ENCODE measurements at regions of chr19 and their contacts with region 1.

Region 1: DNA sequence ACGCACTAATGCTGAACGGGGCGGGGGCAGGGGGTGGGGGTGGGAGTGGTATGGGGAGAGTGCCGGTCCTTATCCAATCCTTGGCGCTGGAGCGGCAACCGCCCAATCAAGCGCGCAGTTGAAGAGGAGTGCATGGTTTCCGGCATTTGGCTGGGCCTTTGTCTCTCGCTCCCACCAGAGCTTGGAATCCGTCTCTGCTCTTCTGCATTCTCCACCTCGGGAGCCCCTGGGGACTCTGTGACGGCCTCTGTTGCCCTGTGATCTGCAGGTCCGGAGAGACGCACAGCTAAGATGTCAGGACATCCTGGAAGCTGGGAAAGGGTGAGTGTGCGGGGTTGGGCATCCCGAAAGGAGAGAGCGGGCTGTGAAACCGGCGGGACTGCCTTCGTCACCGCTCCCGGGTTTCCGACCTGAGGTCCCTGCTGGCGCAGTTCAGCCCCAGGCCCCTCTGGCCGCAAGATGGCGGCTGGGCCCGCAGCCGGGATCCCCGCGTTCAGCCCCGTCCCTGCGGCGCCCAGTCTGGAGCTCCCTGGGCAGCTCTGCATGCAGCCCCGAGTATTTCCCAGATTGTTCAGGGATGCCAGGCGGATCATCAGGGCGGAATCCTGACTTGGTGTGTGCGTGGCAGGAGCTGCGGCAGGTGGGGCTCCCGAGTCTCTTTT is 53.6 kb upstream of the ZNF254 start:
- DNase-seq: peak; percentile 70 to 75 (median 71)
- H3K4me3 ChIP-seq: peak overlapping the region; percentile 77 to 84 (median 78)
- H3K4me3 Mint-ChIP-seq: peak overlapping the region; percentile 100
- H3K27ac ChIP-seq: peak overlapping the region; percentile 86 to 88
- H3K27ac Mint-ChIP-seq: peak overlapping the region; percentile 93 to 99 (median 98)
- H3K4me1 ChIP-seq: peaks cover 29 to 32% of the 10 kb centered on the region in 2 donors
- H3K4me1 Mint-ChIP-seq: peaks cover 38% of the 10 kb centered on the region
- H3K27me3 ChIP-seq: no peaks in the 10 kb centered on the region
- H3K27me3 Mint-ChIP-seq: peaks cover 0 to 2% (median 0%) of the 10 kb centered on the region in 3 donors
- CTCF ChIP-seq: no peak

Region 2: GRCh38 chr19:23896912-23897311 is 136.5 kb before region 1 on chr19:
- intact Hi-C with region 1: no loop called
- DNase-seq: no peak
- H3K4me3 ChIP-seq: no peak overlapping the region
- H3K4me3 Mint-ChIP-seq: no peak overlapping the region
- H3K27ac ChIP-seq: no peak overlapping the region
- H3K27ac Mint-ChIP-seq: no peak overlapping the region
- H3K4me1 ChIP-seq: no peaks in the 10 kb centered on the region
- H3K4me1 Mint-ChIP-seq: no peaks in the 10 kb centered on the region
- H3K27me3 ChIP-seq: no peaks in the 10 kb centered on the region
- H3K27me3 Mint-ChIP-seq: no peaks in the 10 kb centered on the region
- CTCF ChIP-seq: no peak

Region 3: DNA sequence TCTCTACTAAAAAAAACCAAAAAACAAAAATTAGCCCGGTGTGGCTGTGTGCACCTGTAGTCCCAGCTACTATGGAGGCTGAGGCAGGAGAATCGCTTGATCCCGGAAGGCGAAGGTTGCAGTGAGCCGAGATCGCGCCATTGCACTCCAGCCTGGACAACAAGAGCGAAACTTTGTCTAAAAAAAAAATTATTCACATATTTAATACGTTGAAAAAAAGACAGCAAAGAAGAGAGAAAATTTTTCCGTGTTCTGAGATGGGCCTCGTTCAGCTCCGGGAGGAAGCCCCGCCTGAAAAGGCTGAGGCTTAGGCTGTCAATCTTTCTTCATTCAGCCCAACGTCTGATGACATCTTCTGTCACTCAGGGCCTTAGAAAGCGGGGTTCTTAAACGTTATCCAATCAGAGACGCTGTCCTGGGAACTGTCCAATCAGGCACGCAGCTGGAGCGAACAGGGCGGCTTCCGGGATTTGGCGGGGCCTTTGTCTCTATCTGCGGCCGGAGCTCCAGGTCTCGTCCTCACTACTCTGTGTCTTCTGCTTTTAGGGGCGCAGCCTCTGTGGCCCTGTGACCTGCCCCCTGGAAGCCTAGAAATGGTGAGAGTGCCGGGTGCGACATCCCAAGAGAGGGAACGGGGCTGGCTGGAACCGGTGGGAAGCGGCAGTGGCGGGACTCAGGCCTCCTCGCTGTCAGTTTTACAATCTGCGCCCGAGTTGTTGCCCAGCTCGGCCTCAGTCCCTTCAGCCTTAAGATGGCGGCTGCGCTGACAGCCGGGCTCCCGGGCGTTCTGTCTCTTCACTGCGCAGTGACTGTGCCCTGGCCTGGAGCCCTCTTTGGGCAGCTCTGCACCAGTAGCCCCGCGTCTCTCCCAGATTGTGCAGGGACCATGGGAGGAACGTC is 118.8 kb before region 1 on chr19 and contains the start of gene ZNF726:
- intact Hi-C with region 1: loop called in 1 of 2 experiments (anchors 10 kb)
- DNase-seq: peak; percentile 66 to 78 (median 67)
- H3K4me3 ChIP-seq: peak within 1 kb of the TSS; percentile 51 to 80 (median 52)
- H3K4me3 Mint-ChIP-seq: peak within 1 kb of the TSS; percentile 95 to 96
- H3K27ac ChIP-seq: peak within 1 kb of the TSS; percentile 34 to 68
- H3K27ac Mint-ChIP-seq: peak within 1 kb of the TSS; percentile 52 to 93 (median 78)
- H3K4me1 ChIP-seq: peaks cover 3 to 7% of the 10 kb centered on the region in 2 donors
- H3K4me1 Mint-ChIP-seq: peaks cover 12% of the 10 kb centered on the region
- H3K27me3 ChIP-seq: no peaks in the 10 kb centered on the region
- H3K27me3 Mint-ChIP-seq: peaks cover 0 to 10% (median 0%) of the 10 kb centered on the region in 3 donors
- CTCF ChIP-seq: no peak
- polyA plus RNA-seq, gene ZNF726: 0.10 to 0.34 (median 0.28) TPM

Region 4: DNA sequence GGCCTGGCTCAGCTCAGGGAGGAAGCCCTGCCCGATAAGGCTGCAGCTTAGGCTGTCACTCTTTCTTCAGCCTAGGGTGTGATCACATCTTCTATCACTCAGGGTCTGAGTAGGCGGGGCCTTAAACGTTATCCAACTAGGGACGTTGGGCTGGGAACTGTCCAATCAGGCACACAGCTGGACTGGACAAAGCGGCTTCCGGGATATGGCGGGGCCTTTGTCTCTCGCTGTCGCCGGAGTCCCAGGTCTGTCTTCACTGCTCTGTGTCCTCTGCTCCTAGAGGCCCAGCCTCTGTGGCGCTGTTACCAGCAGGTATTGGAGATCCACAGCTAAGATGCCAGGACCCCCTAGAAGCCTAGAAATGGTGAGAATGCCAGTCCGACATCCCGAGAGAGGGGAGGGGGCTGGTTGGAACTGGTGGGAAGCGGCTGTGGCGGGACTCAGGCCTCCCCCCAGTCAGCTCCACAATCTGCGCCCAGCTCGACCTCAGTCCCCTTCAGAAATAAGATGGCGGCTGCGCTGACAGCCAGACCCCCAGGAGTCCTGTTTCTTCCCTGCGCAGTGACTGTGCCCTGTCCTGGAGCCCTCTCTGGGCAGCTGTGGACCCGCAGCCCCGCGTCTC is 53.7 kb after region 1 on chr19 and contains the start of gene ZNF254:
- intact Hi-C with region 1: loop called in 1 of 2 experiments (anchors 10 kb)
- DNase-seq: peak; percentile 80 to 86 (median 82)
- H3K4me3 ChIP-seq: peak within 1 kb of the TSS; percentile 64 to 93 (median 93)
- H3K4me3 Mint-ChIP-seq: peak within 1 kb of the TSS; percentile 91 to 95
- H3K27ac ChIP-seq: peak within 1 kb of the TSS; percentile 91 to 95
- H3K27ac Mint-ChIP-seq: peak within 1 kb of the TSS; percentile 95 to 99 (median 96)
- H3K4me1 ChIP-seq: peaks cover 5 to 9% of the 10 kb centered on the region in 2 donors
- H3K4me1 Mint-ChIP-seq: peaks cover 6% of the 10 kb centered on the region
- H3K27me3 ChIP-seq: no peaks in the 10 kb centered on the region
- H3K27me3 Mint-ChIP-seq: peaks cover 0 to 3% (median 0%) of the 10 kb centered on the region in 3 donors
- CTCF ChIP-seq: no peak
- polyA plus RNA-seq, gene ZNF254: 1.4 to 2.9 (median 1.7) TPM